PC-9 (cell line): ENCODE measurements at regions of chr18 and their contacts with region 1.

Region 1: GRCh38 chr18:35478520-35479435 is 19.0 kb downstream of the INO80C start:
- DNase-seq: peak; percentile 43 to 93
- H3K4me3 ChIP-seq: peak overlapping the region; percentile 49
- H3K27ac ChIP-seq: peak overlapping the region; percentile 97
- H3K4me1 ChIP-seq: peaks cover 54% of the 10 kb centered on the region
- H3K27me3 ChIP-seq: no peaks in the 10 kb centered on the region
- CTCF ChIP-seq: no peak

Region 2: DNA sequence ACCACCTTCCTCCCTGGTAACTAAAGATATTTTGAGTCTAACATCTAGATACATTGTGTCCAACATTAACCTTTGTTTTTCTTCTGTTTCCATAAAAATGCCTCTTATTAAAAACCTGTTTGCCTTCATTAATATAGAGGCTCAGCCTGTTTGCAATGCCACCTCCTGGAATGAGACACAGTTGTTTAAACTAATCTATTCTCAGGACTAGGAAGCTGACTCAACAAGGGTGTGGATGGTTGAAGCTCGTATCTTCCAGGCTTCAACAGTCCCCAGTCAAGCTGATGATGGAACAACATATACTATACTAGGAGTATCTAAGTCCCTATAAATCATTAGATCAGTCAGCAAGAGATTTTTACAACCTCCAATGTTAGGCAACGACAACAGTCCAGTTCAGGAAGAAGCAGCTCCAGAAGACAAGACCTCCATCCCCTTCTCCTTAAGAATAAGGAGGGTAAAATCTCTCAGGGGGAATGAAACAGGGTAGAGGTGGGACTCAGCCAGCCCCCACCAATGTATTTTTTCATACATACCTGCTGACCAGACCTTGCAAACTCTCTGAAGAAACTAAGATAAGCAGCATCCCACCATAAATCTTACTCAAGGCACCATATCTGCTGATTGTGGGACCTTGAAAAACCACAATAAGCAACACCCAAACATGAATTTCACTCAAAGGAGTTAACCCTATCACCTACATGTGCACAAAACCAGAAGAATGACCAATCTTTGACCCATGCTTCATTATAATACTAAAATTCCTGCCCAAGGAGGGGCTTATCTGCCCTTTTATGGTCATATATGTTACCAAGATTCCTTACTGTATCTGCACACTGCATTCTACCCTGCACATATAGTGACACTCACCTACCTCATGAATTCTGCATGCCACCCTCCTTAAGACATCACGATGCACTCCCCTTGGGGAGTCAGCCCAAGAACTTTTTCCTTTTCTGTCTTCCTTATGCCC is 156.0 kb before region 1 on chr18:
- CTCF ChIA-PET with region 1: no interaction called
- POLR2A ChIA-PET with region 1: no interaction called
- intact Hi-C with region 1: no loop called
- DNase-seq: peak in 1 of 2 experiments; percentile 76
- H3K4me3 ChIP-seq: no peak overlapping the region
- H3K27ac ChIP-seq: no peak overlapping the region
- H3K4me1 ChIP-seq: no peaks in the 10 kb centered on the region
- H3K27me3 ChIP-seq: no peaks in the 10 kb centered on the region
- CTCF ChIP-seq: no peak

Region 3: DNA sequence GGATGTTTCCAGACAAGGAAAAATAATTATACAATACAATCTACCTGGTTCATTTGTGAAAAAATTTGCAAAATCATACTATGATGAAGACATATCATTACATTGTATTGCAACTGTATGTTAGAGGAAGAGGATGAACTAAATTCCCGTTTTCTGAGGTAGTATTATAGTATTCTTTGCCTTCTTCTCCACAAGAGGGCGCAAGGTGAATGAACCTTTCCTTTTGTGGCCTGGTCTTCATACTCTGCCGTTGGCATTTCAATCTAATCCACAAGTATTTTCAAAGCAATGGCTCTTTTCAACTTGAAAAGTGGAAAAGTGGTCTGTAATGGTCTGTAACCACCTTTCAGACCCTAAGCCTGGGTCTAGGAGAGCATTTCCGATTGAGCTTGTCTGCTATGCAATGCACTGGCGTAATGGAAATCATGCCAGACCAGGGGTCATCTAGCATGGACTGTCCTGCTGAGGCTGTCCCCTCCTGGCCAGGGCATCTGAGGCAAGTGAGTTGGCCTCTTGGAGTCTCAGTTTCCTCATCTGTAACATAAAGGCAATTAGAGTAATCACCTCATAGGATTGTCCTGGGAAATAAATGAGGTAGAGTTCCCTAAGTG is 70.8 kb before region 1 on chr18:
- CTCF ChIA-PET with region 1: no interaction called
- POLR2A ChIA-PET with region 1: no interaction called
- intact Hi-C with region 1: loop called (anchors 5 kb)
- DNase-seq: peak in 1 of 2 experiments; percentile 17
- H3K4me3 ChIP-seq: no peak overlapping the region
- H3K27ac ChIP-seq: no peak overlapping the region
- H3K4me1 ChIP-seq: peaks cover 53% of the 10 kb centered on the region
- H3K27me3 ChIP-seq: no peaks in the 10 kb centered on the region
- CTCF ChIP-seq: peak; percentile 78

Region 4: GRCh38 chr18:35459005-35459441 is 19.8 kb before region 1 on chr18:
- CTCF ChIA-PET with region 1: no interaction called
- POLR2A ChIA-PET with region 1: interaction called, 7 read pairs
- intact Hi-C with region 1: loop called (anchors 2 kb)
- DNase-seq: peak; percentile 86 to 91
- H3K4me3 ChIP-seq: no peak overlapping the region
- H3K27ac ChIP-seq: peak overlapping the region; percentile 92
- H3K4me1 ChIP-seq: peaks cover 80% of the 10 kb centered on the region
- H3K27me3 ChIP-seq: no peaks in the 10 kb centered on the region
- CTCF ChIP-seq: no peak

Region 5: GRCh38 chr18:35507628-35508027 is 28.9 kb after region 1 on chr18:
- CTCF ChIA-PET with region 1: no interaction called
- POLR2A ChIA-PET with region 1: interaction called, 13 read pairs
- intact Hi-C with region 1: loop called (anchors 5 kb)
- DNase-seq: peak; percentile 78 to 96
- H3K4me3 ChIP-seq: peak overlapping the region; percentile 35; the same call in 1 of the 2 replicates
- H3K27ac ChIP-seq: peak overlapping the region; percentile 95
- H3K4me1 ChIP-seq: peaks cover 70% of the 10 kb centered on the region
- H3K27me3 ChIP-seq: no peaks in the 10 kb centered on the region
- CTCF ChIP-seq: no peak

Region 6: GRCh38 chr18:35526476-35527120 is 47.8 kb after region 1 on chr18:
- CTCF ChIA-PET with region 1: no interaction called
- POLR2A ChIA-PET with region 1: no interaction called
- intact Hi-C with region 1: loop called (anchors 1 kb)
- DNase-seq: peak; percentile 42 to 68
- H3K4me3 ChIP-seq: peak overlapping the region; percentile 19; the same call in 1 of the 2 replicates
- H3K27ac ChIP-seq: no peak overlapping the region
- H3K4me1 ChIP-seq: peaks cover 14% of the 10 kb centered on the region
- H3K27me3 ChIP-seq: no peaks in the 10 kb centered on the region
- CTCF ChIP-seq: no peak